ENCODE measurements at regions of chr11 and their contacts with region 1.

Region 1: GRCh38 chr11:6737872-6738466 is 33.8 kb downstream of the OR2AG2 start:
- DNase-seq: peak; percentile 50

Region 2: DNA sequence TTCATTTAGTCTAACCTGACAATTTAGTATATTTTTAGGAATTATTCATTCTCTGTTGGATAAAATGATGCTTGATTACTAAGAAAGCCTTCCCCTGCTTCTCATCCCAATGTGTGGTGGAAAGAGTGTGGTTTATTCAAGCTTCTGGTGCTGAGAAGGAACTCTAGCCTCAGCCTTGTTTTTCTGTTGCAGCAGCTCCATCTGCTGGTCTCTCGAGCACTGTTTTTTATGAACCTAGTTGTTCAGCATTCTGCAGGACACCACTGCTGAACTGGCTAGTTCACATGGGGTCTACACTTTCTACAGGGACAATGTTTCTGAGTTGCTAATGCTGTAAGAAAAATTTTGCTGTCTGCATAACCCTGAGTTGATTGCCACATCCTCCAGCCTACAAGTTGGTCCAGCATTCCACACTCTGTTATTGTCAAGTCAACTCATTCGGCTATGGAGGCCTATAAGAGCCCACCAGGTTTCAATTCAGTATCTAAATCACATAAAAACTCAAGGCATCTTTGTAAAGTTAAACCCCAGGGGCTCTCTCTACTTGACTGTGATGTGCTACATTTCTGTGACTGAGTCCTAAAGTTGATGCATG is 19.5 kb after region 1 on chr11:
- CTCF ChIA-PET with region 1: interaction called, 41 read pairs
- POLR2A ChIA-PET with region 1: no interaction called
- DNase-seq: peak; percentile 55